ENCODE measurements at regions of chr18 and their contacts with region 1.

Region 1: DNA sequence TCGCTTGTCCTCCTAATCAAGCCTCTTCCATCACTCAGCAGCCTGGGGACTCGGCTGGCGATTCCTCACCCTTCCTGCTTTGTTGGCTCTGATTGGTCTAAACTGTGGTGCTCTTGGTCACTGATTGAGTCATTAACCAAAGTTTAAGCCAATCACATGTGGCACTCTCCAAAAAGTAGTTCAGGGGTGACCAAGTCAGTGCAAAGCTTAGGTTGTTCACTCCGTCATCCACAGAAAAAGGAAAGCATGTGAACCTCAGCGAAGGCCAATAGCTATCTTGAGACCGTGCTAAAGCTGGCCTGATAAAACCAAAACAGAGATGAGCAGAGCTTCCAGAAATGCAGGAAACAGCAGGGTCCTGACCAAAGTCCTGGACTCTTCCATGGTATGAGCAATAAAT is 4.9 kb downstream of the ALPK2 start:
- DNase-seq: peak in 3 of 5 donors; percentile 40 to 56 (median 50)
- ATAC-seq: peak; percentile 67 to 81 (median 72)
- H3K4me3 ChIP-seq: no peak overlapping the region
- H3K27ac ChIP-seq: peak overlapping the region in 11 of 12 donors; percentile 60 to 92 (median 83)
- H3K4me1 ChIP-seq: peaks cover 0 to 25% (median 7%) of the 10 kb centered on the region in 12 donors
- H3K27me3 ChIP-seq: no peaks in the 10 kb centered on the region
- CTCF ChIP-seq: no peak
- POLR2A ChIP-seq: no peak

Region 2: DNA sequence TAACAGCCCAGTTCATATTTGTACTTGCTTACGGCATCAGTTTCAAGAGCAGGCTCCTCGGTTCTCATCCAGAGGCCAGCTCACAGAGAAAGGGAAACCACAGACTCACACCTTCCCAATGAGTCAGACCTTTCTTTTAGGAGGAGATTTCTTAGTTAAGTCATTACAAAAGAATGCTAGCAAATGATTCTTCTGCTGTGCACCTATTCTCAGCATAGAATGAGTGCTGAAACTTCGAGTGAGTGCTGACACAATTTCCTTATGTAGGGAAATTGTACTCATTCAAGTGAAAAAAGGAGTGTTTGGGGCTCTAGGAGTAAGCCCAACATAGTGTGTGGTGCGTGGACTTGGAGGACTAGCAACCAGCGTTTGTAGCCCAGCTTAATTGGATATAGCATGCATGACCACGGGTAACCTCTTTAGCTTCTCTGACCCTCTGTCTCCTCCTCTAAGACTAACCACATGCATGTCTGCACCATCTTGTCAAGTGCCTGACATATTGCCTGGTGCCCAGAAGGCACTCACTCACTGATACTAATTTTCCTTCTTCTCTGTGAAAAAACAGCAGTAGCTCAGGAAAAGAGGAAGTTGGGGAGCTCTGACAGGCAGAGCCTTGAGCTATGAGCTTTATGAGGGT is 82.1 kb before region 1 on chr18:
- intact Hi-C with region 1: loop called in 3 of 10 experiments (anchors 5 to 10 kb)
- DNase-seq: no peak
- ATAC-seq: peak in 2 of 4 donors; percentile 20 to 35
- H3K4me3 ChIP-seq: no peak overlapping the region
- H3K27ac ChIP-seq: peak overlapping the region in 8 of 12 donors; percentile 17 to 72 (median 44)
- H3K4me1 ChIP-seq: peaks cover 0 to 50% (median 18%) of the 10 kb centered on the region in 12 donors
- H3K27me3 ChIP-seq: no peaks in the 10 kb centered on the region
- CTCF ChIP-seq: no peak
- POLR2A ChIP-seq: no peak

Region 3: GRCh38 chr18:58699551-58699950 is 75.5 kb after region 1 on chr18:
- intact Hi-C with region 1: no loop called
- DNase-seq: no peak
- ATAC-seq: no peak
- H3K4me3 ChIP-seq: no peak overlapping the region
- H3K27ac ChIP-seq: no peak overlapping the region
- H3K4me1 ChIP-seq: peaks cover 0 to 25% (median under 1%) of the 10 kb centered on the region in 12 donors
- H3K27me3 ChIP-seq: no peaks in the 10 kb centered on the region
- CTCF ChIP-seq: no peak
- POLR2A ChIP-seq: no peak

Region 4: DNA sequence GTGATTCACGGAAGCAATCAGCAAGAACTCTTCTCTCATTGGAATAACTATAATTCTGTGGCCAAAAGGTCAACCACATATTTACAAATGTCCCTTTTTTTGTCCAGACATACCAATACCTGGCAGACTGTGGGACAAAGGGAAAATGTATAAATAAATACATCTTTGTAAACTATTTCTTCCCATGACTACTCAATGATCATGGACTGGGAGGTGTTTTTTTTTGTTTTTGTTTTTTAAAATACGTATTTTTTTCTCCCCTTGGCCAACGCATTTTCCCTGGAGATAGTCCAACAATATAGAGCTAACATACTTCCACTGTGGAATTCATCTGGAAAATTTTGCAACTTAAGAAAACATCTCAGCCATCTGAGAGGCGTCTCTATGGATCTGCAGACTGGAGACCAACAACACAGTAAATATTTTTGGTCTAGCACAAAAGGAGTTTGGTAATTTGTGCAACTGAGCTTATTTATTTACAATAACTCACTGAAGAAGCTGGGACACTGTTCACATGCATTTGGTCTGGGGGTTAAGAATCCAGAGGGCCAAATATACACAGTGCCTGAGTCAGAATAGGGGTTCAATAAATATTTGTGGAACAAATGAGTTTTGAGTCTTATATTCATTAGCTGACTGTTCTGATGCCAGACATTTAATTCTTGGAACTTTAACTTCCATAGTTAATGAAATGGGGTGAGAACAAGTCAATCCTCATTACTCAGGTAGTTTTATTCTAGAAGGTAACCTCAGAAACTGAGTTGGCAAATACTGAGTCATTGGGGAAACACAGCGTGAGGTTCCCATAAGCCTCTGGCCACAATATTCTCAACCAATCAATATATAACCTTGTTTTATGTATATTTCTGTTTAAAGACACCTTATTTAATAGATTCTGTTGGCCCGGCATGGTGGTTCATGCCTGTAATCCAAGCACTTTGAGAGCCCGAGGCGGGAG is 1037.1 kb after region 1 on chr18:
- intact Hi-C with region 1: no loop called
- DNase-seq: no peak
- ATAC-seq: no peak
- H3K4me3 ChIP-seq: no peak overlapping the region
- H3K27ac ChIP-seq: peak overlapping the region in 1 of 12 donors; percentile 77
- H3K4me1 ChIP-seq: no peaks in the 10 kb centered on the region
- H3K27me3 ChIP-seq: no peaks in the 10 kb centered on the region
- CTCF ChIP-seq: no peak
- POLR2A ChIP-seq: no peak

Measured in heart left ventricle (tissue), 16 donors.